Breast epithelium (tissue), 4 donors: ENCODE measurements at regions of chr1 and their contacts with region 1.

Region 1: DNA sequence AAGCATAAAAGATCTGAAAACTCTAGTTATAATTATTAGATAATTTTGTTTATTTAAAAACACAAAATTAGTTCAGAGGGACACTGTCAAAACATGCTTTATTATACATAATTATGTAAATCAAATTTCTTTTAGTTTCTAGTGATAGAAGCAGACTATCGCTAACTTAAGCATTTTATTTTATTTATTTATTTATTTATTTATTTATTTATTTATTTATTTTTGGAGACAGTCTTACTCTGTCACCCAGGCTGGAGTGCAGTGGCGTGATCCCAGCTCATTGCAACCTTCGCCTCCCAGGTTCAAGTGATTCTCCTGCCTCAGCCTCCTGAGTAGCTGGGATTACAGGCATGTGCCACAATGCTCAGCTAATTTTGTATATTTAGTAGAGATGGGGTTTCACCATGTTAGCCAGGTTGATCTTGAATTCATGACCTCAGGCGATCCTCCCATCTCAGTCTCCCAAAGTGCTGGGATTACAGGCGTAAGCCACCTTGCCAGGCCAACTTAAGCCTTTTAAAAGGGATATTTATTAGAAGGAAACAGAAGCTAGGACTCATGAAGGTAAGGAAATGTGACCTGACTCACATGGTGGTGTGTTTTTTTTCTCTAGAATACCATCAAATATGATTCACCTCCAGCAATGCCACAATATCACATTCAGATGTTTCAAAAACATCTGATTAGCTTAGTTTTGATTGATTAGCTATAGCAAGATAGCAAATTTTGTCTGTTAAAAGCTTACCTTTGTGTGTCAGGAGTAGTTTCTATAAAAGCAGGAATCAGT is 1357.4 kb upstream of the ADGRL4 start:
- DNase-seq: no peak
- H3K4me3 ChIP-seq: no peak overlapping the region
- H3K27ac ChIP-seq: no peak overlapping the region
- H3K4me1 ChIP-seq: no peaks in the 10 kb centered on the region
- H3K27me3 ChIP-seq: no peaks in the 10 kb centered on the region
- CTCF ChIP-seq: no peak
- POLR2A ChIP-seq: no peak

Region 2: DNA sequence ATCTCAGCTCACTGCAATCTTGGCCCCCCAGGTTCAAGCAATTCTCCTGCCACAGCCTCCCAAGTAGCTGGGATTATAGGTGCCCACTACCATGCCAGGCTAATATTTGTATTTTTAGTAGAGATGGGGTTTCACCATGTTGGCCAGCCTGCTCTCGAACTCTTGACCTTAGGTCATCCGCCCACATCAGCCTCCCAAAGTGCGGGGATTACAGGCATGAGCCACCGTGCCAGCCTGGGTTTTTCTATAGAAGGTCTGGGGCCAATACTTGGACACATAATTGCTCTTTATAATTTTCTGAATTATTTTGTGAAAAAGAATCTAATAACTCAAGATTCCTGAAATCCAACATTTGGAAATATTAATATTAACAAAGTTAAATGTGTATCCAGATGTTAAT is 89.6 kb before region 1 on chr1:
- intact Hi-C with region 1: loop called (anchors 5 kb)
- DNase-seq: no peak
- H3K4me3 ChIP-seq: no peak overlapping the region
- H3K27ac ChIP-seq: no peak overlapping the region
- H3K4me1 ChIP-seq: no peaks in the 10 kb centered on the region
- H3K27me3 ChIP-seq: no peaks in the 10 kb centered on the region
- CTCF ChIP-seq: no peak
- POLR2A ChIP-seq: no peak

Region 3: GRCh38 chr1:80807981-80808380 is 444.1 kb after region 1 on chr1:
- intact Hi-C with region 1: no loop called
- DNase-seq: no peak
- H3K4me3 ChIP-seq: no peak overlapping the region
- H3K27ac ChIP-seq: no peak overlapping the region
- H3K4me1 ChIP-seq: no peaks in the 10 kb centered on the region
- H3K27me3 ChIP-seq: no peaks in the 10 kb centered on the region
- CTCF ChIP-seq: no peak
- POLR2A ChIP-seq: no peak

Region 4: GRCh38 chr1:81781749-81782148 is 1417.9 kb after region 1 on chr1:
- intact Hi-C with region 1: no loop called
- DNase-seq: no peak
- H3K4me3 ChIP-seq: no peak overlapping the region
- H3K27ac ChIP-seq: no peak overlapping the region
- H3K4me1 ChIP-seq: no peaks in the 10 kb centered on the region
- H3K27me3 ChIP-seq: no peaks in the 10 kb centered on the region
- CTCF ChIP-seq: no peak
- POLR2A ChIP-seq: no peak